PC-9 (cell line): ENCODE measurements at regions of chr14 and their contacts with region 1.

Region 1: GRCh38 chr14:21346549-21347135 is 37.2 kb downstream of the SUPT16H start:
- DNase-seq: no peak
- H3K4me3 ChIP-seq: no peak overlapping the region
- H3K27ac ChIP-seq: no peak overlapping the region
- H3K4me1 ChIP-seq: no peaks in the 10 kb centered on the region
- H3K27me3 ChIP-seq: no peaks in the 10 kb centered on the region
- CTCF ChIP-seq: no peak

Region 2: GRCh38 chr14:21185491-21185890 is 161.2 kb before region 1 on chr14:
- CTCF ChIA-PET with region 1: no interaction called
- POLR2A ChIA-PET with region 1: no interaction called
- intact Hi-C with region 1: no loop called
- DNase-seq: no peak
- H3K4me3 ChIP-seq: no peak overlapping the region
- H3K27ac ChIP-seq: no peak overlapping the region
- H3K4me1 ChIP-seq: no peaks in the 10 kb centered on the region
- H3K27me3 ChIP-seq: no peaks in the 10 kb centered on the region
- CTCF ChIP-seq: no peak

Region 3: GRCh38 chr14:21220874-21221477 is 125.7 kb before region 1 on chr14:
- CTCF ChIA-PET with region 1: interaction called, 20 read pairs
- POLR2A ChIA-PET with region 1: no interaction called
- intact Hi-C with region 1: no loop called
- DNase-seq: no peak
- H3K4me3 ChIP-seq: no peak overlapping the region
- H3K27ac ChIP-seq: 0 out of 2 replicates have a peak overlapping the region, but pooled peaks have one; percentile 6
- H3K4me1 ChIP-seq: no peaks in the 10 kb centered on the region
- H3K27me3 ChIP-seq: no peaks in the 10 kb centered on the region
- CTCF ChIP-seq: no peak

Region 4: DNA sequence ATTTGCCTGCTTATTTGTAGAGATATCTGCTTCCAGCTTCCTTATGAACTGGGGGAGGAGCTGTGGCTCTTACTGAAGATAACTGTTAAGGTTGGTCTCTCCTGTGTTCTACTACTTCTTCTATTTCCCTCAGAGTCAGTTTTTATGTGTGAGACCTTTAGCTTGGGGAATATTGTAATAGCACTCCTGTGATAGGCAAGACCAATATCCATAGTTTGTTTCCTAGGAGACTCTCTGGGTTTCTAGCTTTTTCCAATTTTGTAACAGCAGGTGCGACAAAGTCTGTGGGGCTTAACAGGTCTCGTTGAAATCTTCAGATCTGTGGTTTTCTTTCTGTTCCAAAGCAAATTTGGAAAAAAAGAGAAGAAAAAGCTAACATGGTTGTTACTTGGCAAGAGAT is 233.3 kb after region 1 on chr14 and contains the start of gene OR10G3:
- CTCF ChIA-PET with region 1: no interaction called
- POLR2A ChIA-PET with region 1: no interaction called
- intact Hi-C with region 1: no loop called
- DNase-seq: no peak
- H3K4me3 ChIP-seq: no peak within 1 kb of the TSS
- H3K27ac ChIP-seq: no peak within 1 kb of the TSS
- H3K4me1 ChIP-seq: no peaks in the 10 kb centered on the region
- H3K27me3 ChIP-seq: no peaks in the 10 kb centered on the region; the same call in none of the 2 replicates
- CTCF ChIP-seq: no peak
- total RNA-seq, gene OR10G3: not detected in 2 replicates

Region 5: DNA sequence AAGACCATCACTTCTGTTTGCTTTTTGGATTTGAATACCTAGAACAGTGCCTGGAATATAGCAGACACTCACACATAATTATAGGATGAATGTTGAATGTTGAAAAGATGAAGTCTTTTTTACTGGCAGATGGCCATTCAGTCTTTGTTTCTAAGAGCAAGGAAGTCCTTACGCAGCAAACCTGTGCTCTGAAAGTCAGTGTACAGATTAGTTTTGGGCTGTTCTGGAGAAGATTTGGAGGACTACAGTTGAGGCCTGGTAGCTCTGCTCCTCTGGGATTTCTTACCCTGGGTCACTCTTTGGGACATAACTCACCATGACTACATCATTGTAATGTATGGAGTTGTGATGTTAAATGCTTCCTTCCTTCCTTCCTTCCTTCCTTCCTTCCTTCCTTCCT is 310.3 kb after region 1 on chr14:
- CTCF ChIA-PET with region 1: no interaction called
- POLR2A ChIA-PET with region 1: no interaction called
- intact Hi-C with region 1: no loop called
- DNase-seq: no peak
- H3K4me3 ChIP-seq: no peak overlapping the region
- H3K27ac ChIP-seq: no peak overlapping the region
- H3K4me1 ChIP-seq: no peaks in the 10 kb centered on the region
- H3K27me3 ChIP-seq: no peaks in the 10 kb centered on the region
- CTCF ChIP-seq: no peak